ENCODE measurements at regions of chr9 and their contacts with region 1.

Region 1: GRCh38 chr9:94269264-94269663 is 10.2 kb downstream of the ZNF169 start:
- DNase-seq: no peak
- H3K4me3 ChIP-seq: no peak overlapping the region
- H3K27ac ChIP-seq: no peak overlapping the region
- H3K4me1 ChIP-seq: no peaks in the 10 kb centered on the region
- H3K27me3 ChIP-seq: no peaks in the 10 kb centered on the region
- CTCF ChIP-seq: no peak

Region 2: GRCh38 chr9:94303321-94303720 is 34.1 kb after region 1 on chr9:
- CTCF ChIA-PET with region 1: interaction called, 16 read pairs
- POLR2A ChIA-PET with region 1: no interaction called
- intact Hi-C with region 1: no loop called
- DNase-seq: no peak
- H3K4me3 ChIP-seq: no peak overlapping the region
- H3K27ac ChIP-seq: no peak overlapping the region
- H3K4me1 ChIP-seq: no peaks in the 10 kb centered on the region
- H3K27me3 ChIP-seq: no peaks in the 10 kb centered on the region
- CTCF ChIP-seq: no peak

Region 3: GRCh38 chr9:95103851-95104580 is 834.8 kb after region 1 on chr9:
- CTCF ChIA-PET with region 1: no interaction called
- POLR2A ChIA-PET with region 1: interaction called, 30 read pairs
- intact Hi-C with region 1: no loop called
- DNase-seq: no peak
- H3K4me3 ChIP-seq: no peak overlapping the region
- H3K27ac ChIP-seq: peak overlapping the region; percentile 72; the same call in 1 of the 2 replicates
- H3K4me1 ChIP-seq: peaks cover 16% of the 10 kb centered on the region
- H3K27me3 ChIP-seq: no peaks in the 10 kb centered on the region
- CTCF ChIP-seq: no peak

Measured in PC-9 (cell line).